ENCODE measurements at regions of chr15 and their contacts with region 1.

Region 1: GRCh38 chr15:58182460-58183163 is 44.4 kb downstream of the AQP9 start:
- DNase-seq: no peak
- H3K4me3 ChIP-seq: no peak overlapping the region
- CTCF ChIP-seq: peak; percentile 87

Region 2: DNA sequence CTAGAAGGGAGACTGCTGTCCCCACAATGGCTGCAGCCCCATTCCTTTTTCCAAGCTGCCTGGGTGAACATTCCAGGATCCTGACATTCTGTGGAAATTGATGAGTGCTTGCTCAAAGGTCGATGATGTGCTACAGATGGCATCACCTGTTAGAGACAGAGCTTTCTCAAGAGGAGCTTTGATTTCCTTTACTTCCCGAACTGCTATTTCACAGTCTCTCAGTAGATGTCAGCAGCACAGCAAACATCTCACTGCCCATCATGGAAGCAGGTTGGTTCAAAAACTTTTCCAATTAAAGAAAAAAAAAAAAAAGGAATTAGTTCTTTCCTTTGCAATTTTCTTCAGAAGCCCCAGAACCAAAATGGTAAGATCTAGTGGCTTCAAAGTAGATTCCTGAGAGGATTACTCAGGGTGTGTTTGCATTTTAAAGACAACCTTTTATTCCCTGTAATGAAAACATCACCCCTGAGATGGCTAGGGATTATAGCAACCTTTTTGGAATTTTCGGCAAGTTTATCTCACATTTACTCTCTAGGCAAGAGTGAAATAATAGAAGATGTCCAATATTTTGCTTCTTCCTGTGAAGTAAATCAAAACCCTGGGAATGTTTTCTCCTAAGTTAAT is 431.3 kb before region 1 on chr15:
- CTCF ChIA-PET with region 1: interaction called, 11 read pairs
- POLR2A ChIA-PET with region 1: no interaction called
- DNase-seq: no peak
- H3K4me3 ChIP-seq: no peak overlapping the region
- CTCF ChIP-seq: peak; percentile 66

Region 3: DNA sequence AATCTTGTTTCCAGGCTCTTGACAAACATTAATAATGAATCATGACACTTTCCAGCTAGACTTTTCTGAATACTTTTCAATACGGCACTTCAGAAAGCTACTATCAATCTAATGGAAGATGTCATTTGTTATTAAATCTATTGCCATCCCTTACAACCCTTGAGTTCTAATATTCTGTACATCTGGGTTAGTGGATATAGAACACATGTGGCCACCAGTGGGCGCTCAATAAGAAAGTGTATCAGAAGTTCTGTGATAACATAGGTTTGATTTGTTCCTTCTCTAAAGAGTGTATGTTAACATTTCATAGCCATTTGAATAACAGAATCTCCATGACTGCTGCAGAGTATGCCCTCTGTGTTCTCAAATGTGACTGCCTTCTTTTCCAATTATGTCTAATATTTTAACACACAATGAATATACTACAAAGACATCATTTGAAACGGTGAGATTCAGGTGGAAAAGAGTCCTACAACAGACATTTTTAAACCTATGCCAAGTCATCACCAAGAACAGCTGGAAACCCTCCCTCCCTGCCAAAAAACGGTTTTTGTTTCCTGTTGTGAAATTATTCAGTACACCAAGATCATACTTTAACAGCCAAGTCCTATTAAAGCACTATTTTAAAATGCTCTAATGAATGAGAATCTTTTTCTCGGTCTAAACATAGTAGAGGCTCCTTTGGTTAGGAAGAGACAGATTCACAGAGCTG is 139.3 kb before region 1 on chr15:
- CTCF ChIA-PET with region 1: interaction called, 39 read pairs
- POLR2A ChIA-PET with region 1: no interaction called
- DNase-seq: no peak
- H3K4me3 ChIP-seq: no peak overlapping the region
- CTCF ChIP-seq: peak; percentile 51

Region 4: GRCh38 chr15:58171476-58172057 is 11.0 kb before region 1 on chr15:
- CTCF ChIA-PET with region 1: interaction called, 13 read pairs
- POLR2A ChIA-PET with region 1: no interaction called
- DNase-seq: no peak
- H3K4me3 ChIP-seq: no peak overlapping the region
- CTCF ChIP-seq: no peak

Measured in AG04449 (cell line).